Activated CD8-positive, alpha-beta T cell treated with anti-CD3 and anti-CD28 coated beads for 36 hours (primary cell): ENCODE measurements at regions of chrX and their contacts with region 1.

Region 1: DNA sequence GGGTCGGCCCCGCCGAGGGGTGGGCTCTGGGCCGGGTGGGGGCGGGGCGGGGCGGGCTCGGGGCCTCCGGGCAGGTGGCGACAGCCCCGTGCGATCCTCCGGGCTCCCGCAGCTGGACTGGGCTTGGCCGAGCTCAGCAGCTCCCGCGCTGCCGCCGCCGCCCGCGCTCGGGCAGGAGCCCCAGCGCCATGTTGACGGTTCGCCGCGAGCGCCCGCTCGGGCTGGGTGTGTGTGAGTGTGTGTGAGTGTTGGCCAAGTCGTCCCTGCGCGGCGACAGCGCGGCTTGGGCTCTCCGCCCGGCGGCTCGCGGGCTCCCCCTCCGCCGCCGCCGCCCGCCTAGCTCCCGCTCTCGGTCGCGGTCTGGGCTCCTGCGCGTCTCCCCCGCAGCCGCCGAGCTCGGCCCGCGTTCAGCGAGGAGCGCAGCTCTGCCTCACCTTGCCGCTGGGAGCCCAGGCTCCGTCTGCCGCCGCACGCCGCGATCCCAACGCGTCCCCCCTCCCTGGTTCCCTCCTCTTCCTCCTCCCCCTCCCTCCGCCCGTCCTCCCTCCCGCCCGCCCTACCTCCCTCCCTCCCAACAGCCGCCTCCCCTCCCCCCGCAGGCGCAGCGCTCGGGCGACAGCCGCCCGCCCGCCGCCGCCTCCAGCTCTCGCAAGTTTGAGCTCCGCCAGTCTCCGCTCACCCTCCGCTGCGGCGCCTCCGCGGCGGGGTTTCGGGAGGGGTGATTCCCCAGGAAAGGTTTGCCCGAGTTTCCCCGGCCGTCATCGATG is at the start of gene BCOR:
- DNase-seq: peak; percentile 77
- ATAC-seq: peak; percentile 45
- H3K4me3 Mint-ChIP-seq: peak within 1 kb of the TSS; percentile 83
- H3K27ac Mint-ChIP-seq: peak within 1 kb of the TSS; percentile 81
- H3K4me1 Mint-ChIP-seq: peaks cover 23% of the 10 kb centered on the region
- H3K27me3 Mint-ChIP-seq: no peaks in the 10 kb centered on the region
- CTCF ChIP-seq: no peak
- total RNA-seq, gene BCOR: 38.3 to 39.6 TPM

Region 2: DNA sequence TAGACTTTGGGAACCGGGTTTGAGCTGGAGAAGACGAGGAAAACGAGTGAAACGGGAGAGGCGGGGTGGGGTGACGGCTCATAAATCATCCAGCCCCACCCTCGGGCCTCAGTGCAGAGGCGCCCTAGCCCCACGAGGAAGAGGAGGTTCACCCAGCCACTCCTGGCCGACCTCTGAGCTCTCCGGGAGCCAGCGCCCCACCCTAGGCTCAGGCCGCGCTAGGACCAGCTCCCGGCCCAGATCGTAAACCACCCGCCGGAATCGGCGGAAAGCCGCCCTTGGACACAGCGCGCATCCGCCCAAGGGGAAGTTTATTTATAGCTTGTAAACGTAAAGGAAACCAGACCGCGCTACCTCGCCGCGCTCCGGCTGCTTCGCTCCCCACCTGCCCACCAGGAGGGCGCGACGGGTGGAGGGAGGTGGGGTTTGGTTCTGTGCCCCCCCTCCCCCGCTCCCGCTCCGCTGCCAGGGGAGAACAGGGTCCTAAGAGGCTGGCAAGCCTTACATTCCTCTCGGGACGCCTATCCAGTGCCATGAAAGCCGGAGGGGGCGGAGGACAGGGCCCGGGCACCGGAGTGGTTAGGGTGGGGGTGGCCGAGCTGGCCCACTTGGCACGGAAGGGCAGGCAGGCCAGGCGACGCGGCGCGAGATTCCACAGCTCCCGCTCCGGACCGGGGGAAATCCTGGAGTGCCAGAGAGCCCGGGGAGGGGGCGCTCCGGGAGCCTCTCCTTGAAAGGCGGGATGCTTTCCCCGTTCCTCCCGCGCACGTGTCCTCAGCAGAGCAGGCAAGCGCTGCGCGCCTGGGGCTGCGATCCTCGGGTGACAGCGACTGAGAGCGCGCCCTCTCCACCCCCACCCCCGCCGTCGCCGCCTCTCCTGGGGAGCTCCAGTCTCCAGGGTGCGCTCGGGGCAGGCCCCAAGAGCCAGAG is 84.1 kb before region 1 on chrX:
- CTCF ChIA-PET with region 1: no interaction called
- POLR2A ChIA-PET with region 1: interaction called, 5 read pairs
- intact Hi-C with region 1: loop called (anchors 10 kb)
- DNase-seq: peak; percentile 67
- ATAC-seq: peak; percentile 39
- H3K4me3 Mint-ChIP-seq: peak overlapping the region; percentile 67
- H3K27ac Mint-ChIP-seq: peak overlapping the region; percentile 57
- H3K4me1 Mint-ChIP-seq: peaks cover 32% of the 10 kb centered on the region
- H3K27me3 Mint-ChIP-seq: peaks cover 11% of the 10 kb centered on the region
- CTCF ChIP-seq: no peak

Region 3: DNA sequence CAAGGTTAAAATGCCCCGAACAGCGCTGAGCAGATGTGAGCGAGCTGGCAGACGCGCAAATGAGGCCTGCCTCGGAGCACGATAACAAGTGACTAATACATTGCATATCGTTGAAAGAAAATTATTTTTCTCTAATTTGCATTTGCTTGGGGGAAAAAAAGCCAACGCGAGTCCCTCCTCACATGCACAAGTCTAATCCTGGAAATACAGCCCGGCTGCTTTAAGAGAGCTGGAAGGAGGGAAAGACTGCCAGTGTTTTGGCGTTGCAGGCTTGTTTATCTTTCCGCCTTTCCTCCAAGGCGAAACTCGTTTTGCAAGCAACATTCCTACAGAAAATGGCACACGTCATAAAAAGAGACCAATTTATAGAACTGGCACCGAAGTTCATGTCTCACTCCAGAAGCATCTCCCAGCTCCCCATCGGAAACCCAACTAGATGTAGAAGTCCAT is 12.6 kb before region 1 on chrX:
- CTCF ChIA-PET with region 1: interaction called, 4 read pairs
- POLR2A ChIA-PET with region 1: interaction called, 11 read pairs
- intact Hi-C with region 1: no loop called
- DNase-seq: peak; percentile 20
- ATAC-seq: no peak
- H3K4me3 Mint-ChIP-seq: no peak overlapping the region
- H3K27ac Mint-ChIP-seq: no peak overlapping the region
- H3K4me1 Mint-ChIP-seq: peaks cover 68% of the 10 kb centered on the region
- H3K27me3 Mint-ChIP-seq: no peaks in the 10 kb centered on the region
- CTCF ChIP-seq: no peak

Region 4: GRCh38 chrX:40153335-40154249 is 55.9 kb after region 1 on chrX:
- CTCF ChIA-PET with region 1: interaction called, 4 read pairs
- POLR2A ChIA-PET with region 1: interaction called, 11 read pairs
- intact Hi-C with region 1: loop called (anchors 5 kb)
- DNase-seq: peak; percentile 89
- ATAC-seq: peak; percentile 80
- H3K4me3 Mint-ChIP-seq: peak overlapping the region; percentile 76
- H3K27ac Mint-ChIP-seq: peak overlapping the region; percentile 81
- H3K4me1 Mint-ChIP-seq: peaks cover 17% of the 10 kb centered on the region
- H3K27me3 Mint-ChIP-seq: no peaks in the 10 kb centered on the region
- CTCF ChIP-seq: no peak

Region 5: GRCh38 chrX:40169193-40170101 is 71.8 kb after region 1 on chrX:
- CTCF ChIA-PET with region 1: interaction called, 3 read pairs
- POLR2A ChIA-PET with region 1: interaction called, 32 read pairs
- intact Hi-C with region 1: loop called (anchors 5 kb)
- DNase-seq: peak; percentile 92
- ATAC-seq: peak; percentile 65
- H3K4me3 Mint-ChIP-seq: peak overlapping the region; percentile 85
- H3K27ac Mint-ChIP-seq: peak overlapping the region; percentile 97
- H3K4me1 Mint-ChIP-seq: peaks cover 27% of the 10 kb centered on the region
- H3K27me3 Mint-ChIP-seq: no peaks in the 10 kb centered on the region
- CTCF ChIP-seq: peak; percentile 19

Region 6: DNA sequence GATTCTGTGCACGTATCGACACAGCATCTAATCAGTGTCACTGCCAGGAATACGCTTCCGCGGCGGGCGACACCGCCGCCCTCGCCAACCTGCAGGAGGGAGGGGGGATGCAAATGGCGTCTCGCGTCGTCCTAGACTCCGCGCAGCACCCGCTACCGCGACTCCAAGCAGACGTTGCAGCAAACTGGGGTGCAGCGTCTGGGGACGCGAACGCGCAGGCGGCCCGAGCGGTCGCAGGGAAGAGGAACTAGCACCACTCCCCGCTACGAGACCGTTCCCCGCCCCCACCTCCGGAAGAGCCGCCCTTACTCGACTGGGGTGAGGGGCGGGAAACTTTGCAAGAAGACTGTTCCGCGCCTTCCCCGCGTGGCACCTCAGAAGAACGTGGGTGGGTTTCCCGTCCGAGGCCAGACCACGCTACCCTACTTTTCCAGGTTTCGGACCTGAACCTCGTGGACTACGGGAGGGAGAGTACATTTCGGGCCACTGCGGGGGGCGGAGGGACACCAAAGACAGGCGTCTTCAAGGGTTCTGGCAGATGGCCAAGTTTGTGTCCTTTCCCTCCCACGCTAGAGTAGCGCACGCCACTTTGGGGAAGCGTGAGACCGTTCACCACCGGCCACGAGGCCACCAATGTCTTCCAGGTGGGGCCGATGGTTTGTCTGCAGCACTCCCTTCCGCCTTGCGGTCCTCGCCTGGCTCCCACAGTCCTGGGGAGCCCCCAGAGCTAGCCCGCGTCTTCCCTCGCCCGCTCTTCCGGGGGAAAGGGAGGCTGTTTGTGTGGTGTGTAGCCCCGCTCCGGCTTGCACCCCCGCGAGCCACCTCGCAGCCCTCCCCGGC is 78.1 kb after region 1 on chrX:
- CTCF ChIA-PET with region 1: interaction called, 3 read pairs
- POLR2A ChIA-PET with region 1: interaction called, 32 read pairs
- intact Hi-C with region 1: loop called (anchors 5 kb)
- DNase-seq: peak; percentile 80
- ATAC-seq: peak; percentile 29
- H3K4me3 Mint-ChIP-seq: peak overlapping the region; percentile 83
- H3K27ac Mint-ChIP-seq: peak overlapping the region; percentile 97
- H3K4me1 Mint-ChIP-seq: peaks cover 22% of the 10 kb centered on the region
- H3K27me3 Mint-ChIP-seq: no peaks in the 10 kb centered on the region
- CTCF ChIP-seq: no peak